ENCODE measurements at regions of chr11 and their contacts with region 1.

Region 1: GRCh38 chr11:32583459-32584271 is at the start of gene EIF3M:
- DNase-seq: peak; percentile 98
- ATAC-seq: peak; percentile 100
- total RNA-seq, gene EIF3M: 145 to 180 TPM

Region 2: GRCh38 chr11:32420937-32421901 is 162.4 kb before region 1 on chr11:
- intact Hi-C with region 1: loop called in 1 of 2 experiments (anchors 10 kb)
- DNase-seq: no peak
- ATAC-seq: peak; percentile 43 to 50